Lower lobe of right lung (tissue), 2 donors: ENCODE measurements at regions of chr2 and their contacts with region 1.

Region 1: GRCh38 chr2:127486247-127487058 is 39.8 kb downstream of the IWS1 start:
- DNase-seq: no peak
- ATAC-seq: peak; percentile 60 to 66
- H3K4me3 ChIP-seq: no peak overlapping the region
- H3K27ac ChIP-seq: no peak overlapping the region
- H3K4me1 ChIP-seq: peaks cover 10% of the 10 kb centered on the region
- H3K27me3 ChIP-seq: no peaks in the 10 kb centered on the region
- CTCF ChIP-seq: no peak

Region 2: GRCh38 chr2:127324635-127325034 is 161.8 kb before region 1 on chr2:
- intact Hi-C with region 1: loop called (anchors 10 kb)
- DNase-seq: no peak
- ATAC-seq: no peak
- H3K4me3 ChIP-seq: no peak overlapping the region
- H3K27ac ChIP-seq: no peak overlapping the region
- H3K4me1 ChIP-seq: no peaks in the 10 kb centered on the region
- H3K27me3 ChIP-seq: no peaks in the 10 kb centered on the region
- CTCF ChIP-seq: peak; percentile 50

Region 3: DNA sequence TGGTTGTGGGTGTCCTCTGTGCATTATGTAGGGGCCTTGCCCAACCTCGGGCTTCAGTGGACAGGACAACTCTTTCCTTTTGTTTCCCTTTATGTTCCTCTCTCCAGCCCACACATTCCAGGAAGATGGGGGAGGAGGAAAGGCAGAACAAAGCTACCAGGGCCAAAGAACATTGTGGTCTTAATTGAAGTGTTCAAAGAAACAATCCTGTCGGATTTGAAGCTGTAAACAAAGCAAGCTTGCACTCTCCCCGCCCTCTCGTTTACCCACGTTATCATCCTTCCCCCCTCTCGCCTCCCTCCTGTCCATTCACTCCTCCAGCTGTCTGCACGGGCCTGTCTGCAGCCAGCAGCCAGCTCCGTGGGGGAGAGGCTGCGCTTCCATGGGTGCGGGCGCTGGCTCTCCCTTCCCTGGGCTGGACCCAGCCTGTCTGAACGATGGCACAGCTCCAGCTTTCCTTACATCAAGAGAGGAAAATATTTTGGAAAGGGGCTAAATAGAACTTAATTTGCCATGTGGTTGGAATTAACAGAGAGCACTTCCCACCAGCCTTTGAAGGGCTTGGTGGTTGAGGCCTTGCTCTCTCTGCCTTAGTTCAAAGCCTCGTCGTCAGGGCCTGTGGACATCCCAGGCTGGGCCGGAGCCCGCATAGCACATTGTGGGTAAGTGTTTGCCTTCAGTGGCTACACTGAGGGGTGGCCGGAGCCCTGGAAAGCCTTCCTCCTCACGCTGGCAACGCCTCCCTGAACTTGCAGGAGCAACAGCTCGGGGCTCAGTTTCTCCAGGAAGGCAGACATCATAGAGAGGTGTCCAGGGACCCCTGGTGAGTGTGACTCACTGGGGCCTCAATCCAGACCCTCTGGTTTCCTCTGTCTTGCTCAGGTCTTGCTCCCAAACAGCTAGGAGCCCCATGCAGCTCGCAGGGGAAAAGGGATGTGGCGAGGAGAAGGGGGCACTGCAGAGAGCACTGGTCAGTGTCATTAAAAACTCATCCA is 892.9 kb after region 1 on chr2:
- intact Hi-C with region 1: no loop called
- DNase-seq: peak; percentile 67
- ATAC-seq: peak; percentile 63 to 78
- H3K4me3 ChIP-seq: no peak overlapping the region
- H3K27ac ChIP-seq: peak overlapping the region; percentile 82
- H3K4me1 ChIP-seq: peaks cover 64% of the 10 kb centered on the region
- H3K27me3 ChIP-seq: no peaks in the 10 kb centered on the region
- CTCF ChIP-seq: no peak